Breast epithelium (tissue), 4 donors: ENCODE measurements at regions of chr3 and their contacts with region 1.

Region 1: DNA sequence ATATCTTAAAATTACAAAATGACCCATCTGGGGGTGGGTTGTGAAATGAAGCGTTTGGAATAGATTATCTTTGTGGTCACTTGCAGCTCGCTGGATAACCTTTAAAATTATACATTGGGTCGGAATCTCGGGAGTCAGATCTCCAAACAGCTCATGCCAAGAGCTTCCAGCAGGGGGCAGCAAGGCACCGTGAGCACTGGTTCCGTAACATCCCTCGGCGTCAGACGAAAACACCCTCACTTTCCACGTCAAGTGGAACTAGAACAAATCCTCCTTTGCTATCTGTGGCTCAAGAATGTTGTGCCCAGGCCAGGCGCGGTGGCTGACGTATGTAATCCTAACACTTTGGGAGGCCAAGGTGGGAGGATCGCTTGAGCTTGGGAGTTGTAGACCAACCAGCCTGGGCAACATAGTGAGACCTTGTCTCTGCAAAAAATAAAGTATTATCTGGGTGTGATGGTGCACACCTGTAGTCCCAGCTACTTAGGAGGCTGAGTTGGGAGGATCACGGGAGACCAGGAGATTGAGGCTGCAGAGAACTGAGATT is 31.1 kb downstream of the UMPS start:
- DNase-seq: peak; percentile 78 to 84
- H3K4me3 ChIP-seq: no peak overlapping the region
- H3K27ac ChIP-seq: peak overlapping the region; percentile 34 to 52
- H3K4me1 ChIP-seq: peaks cover 0 to 4% of the 10 kb centered on the region in 2 donors
- H3K27me3 ChIP-seq: no peaks in the 10 kb centered on the region
- CTCF ChIP-seq: peak; percentile 96 to 98 (median 97)
- POLR2A ChIP-seq: no peak

Region 2: GRCh38 chr3:124903907-124904834 is 142.8 kb after region 1 on chr3:
- intact Hi-C with region 1: loop called (anchors 5 kb)
- DNase-seq: no peak
- H3K4me3 ChIP-seq: no peak overlapping the region
- H3K27ac ChIP-seq: no peak overlapping the region
- H3K4me1 ChIP-seq: no peaks in the 10 kb centered on the region
- H3K27me3 ChIP-seq: no peaks in the 10 kb centered on the region
- CTCF ChIP-seq: no peak
- POLR2A ChIP-seq: no peak

Region 3: DNA sequence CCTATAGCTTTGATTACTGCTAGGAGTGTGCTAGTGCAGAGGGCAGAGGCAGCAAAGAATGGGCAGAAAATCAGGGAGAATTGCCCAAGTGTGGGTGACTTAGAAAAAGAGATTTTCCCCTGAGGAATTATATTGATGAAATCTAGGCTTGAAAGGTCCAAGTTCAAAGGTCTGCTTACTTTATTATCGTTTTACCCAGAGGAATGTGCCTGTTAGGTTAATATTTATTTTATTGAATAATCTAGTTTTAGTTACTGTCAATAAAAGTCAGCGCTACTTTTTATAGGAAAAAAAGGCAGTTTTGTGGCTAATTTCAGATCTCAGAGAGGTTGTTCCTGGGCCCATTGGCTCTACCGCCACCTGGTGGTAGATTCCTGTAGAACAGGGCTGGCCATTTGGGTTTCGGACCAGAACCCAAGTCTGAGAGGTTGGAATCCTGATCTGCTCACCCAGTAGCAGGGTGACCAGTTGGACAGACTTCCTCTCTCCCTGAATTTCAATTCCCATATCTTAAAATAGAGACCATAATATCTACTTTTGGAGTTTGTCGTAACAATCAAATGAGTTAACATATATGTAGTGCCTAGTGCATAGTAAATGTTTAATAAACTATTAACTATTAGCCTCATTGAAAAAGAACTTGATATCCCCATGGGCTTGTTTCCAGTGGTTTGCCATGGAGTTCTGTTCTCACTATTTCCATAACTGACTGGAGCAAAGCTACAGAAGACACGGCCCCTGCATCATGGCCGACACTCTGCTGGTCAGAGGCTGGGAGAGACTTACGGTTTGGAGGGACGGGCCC is 676.5 kb after region 1 on chr3:
- intact Hi-C with region 1: loop called (anchors 5 kb)
- DNase-seq: peak; percentile 24 to 56
- H3K4me3 ChIP-seq: no peak overlapping the region
- H3K27ac ChIP-seq: no peak overlapping the region
- H3K4me1 ChIP-seq: no peaks in the 10 kb centered on the region
- H3K27me3 ChIP-seq: no peaks in the 10 kb centered on the region
- CTCF ChIP-seq: peak; percentile 82 to 89 (median 89)
- POLR2A ChIP-seq: no peak